AG04449 (cell line): ENCODE measurements at regions of chr9 and their contacts with region 1.

Region 1: DNA sequence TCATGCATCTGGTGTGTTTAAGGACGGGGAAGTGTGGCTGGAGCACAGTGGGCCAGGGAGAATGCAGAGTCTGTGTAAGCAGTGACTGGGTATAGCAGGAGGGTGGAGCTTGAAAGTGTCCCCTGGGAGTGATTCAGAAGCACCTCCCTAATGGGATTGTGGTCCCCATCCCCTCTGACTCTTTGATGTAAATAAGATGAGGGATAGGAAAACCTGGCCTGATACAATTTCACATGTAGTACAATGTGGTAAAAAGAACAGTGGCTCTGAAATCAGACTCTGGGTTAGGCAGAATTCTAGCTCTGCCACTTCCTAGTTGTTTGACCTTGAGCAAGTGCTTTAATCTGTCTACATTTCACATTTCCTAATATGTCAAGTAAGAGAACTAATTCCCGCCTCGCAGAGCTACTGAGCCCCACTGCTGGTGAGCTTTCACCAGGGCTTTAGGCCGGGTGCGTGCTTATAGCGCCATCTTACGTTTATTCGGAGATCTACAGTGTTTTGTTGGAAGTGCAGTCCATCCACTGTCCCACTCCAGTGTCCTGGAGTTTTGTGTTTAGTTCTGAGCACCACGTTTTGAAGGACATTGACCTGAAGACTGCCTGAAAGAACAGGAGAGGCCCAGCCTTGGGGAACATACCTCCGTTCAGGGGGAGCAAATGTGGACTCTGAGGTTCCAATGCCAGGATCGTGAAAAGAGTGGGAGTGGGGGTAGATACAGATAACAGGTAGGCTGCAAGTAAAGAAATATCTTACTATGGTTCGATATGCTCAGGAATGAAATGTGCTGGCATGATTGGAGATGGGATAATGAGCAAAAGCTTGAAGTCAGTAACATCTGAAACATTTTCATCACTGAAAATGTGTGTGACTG is 51.2 kb upstream of the TESK1 start:
- DNase-seq: no peak
- H3K4me3 ChIP-seq: no peak overlapping the region
- CTCF ChIP-seq: peak; percentile 68

Region 2: DNA sequence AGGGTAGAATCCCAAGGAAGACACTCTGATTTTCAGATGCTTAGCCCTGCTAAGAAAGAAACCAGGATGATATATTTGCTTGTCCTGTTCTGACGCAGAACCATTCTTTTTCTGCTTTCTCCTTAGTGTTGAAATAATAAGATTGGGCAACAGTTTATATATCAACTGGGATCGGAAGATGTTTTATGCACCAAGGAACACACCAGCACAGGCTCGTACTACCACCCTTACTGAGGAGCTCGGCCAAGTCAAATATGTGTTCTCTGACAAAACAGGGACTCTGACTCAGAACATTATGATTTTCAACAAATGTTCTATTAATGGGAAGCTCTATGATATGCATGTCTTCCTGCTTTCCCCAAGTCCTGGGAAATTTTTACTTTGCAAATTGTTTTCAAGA is 83.0 kb before region 1 on chr9:
- CTCF ChIA-PET with region 1: interaction called, 170 read pairs
- POLR2A ChIA-PET with region 1: no interaction called
- DNase-seq: no peak
- H3K4me3 ChIP-seq: no peak overlapping the region
- CTCF ChIP-seq: no peak

Region 3: GRCh38 chr9:35489313-35490154 is 64.4 kb before region 1 on chr9 and contains the start of gene RUSC2:
- CTCF ChIA-PET with region 1: interaction called, 74 read pairs
- POLR2A ChIA-PET with region 1: interaction called, 5 read pairs
- DNase-seq: peak; percentile 65
- H3K4me3 ChIP-seq: peak within 1 kb of the TSS; percentile 93
- CTCF ChIP-seq: peak; percentile 52

Region 4: GRCh38 chr9:35510745-35511428 is 43.0 kb before region 1 on chr9:
- CTCF ChIA-PET with region 1: interaction called, 83 read pairs
- POLR2A ChIA-PET with region 1: no interaction called
- DNase-seq: peak; percentile 98
- H3K4me3 ChIP-seq: no peak overlapping the region
- CTCF ChIP-seq: peak; percentile 42

Region 5: GRCh38 chr9:35529161-35529823 is 24.6 kb before region 1 on chr9:
- CTCF ChIA-PET with region 1: interaction called, 83 read pairs
- POLR2A ChIA-PET with region 1: no interaction called
- DNase-seq: no peak
- H3K4me3 ChIP-seq: no peak overlapping the region
- CTCF ChIP-seq: no peak

Region 6: DNA sequence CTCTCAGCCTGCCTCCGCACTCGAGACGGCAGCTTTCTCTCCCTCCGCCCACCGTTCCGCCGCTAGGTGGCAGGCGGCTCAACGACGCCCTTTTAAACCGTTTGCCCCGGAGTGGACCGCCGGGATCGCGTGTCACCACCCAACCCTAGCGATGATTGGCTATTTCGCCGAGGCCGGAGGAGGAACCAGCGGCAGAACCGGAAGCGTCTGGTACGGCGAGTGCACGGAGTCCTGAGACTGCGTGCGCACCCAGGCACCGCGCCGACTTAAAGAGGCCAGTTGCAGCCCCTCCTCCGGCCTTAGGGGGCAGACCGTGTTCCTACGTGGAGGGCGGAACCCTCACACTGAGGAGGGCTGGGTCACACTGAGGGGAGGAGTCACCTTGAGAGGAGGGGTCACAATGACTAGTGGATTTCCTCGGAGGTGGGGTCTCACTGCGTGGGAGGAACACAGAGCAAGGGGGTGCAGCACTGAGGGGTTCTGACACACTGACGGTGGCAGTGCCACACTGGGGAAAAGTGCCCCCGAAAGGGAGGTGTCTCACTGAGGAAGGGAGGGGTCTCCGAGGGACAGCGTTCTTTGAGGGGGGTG is 50.2 kb after region 1 on chr9:
- CTCF ChIA-PET with region 1: interaction called, 13 read pairs
- POLR2A ChIA-PET with region 1: interaction called, 3 read pairs
- DNase-seq: peak; percentile 96
- H3K4me3 ChIP-seq: peak overlapping the region; percentile 72
- CTCF ChIP-seq: peak; percentile 92

Region 7: DNA sequence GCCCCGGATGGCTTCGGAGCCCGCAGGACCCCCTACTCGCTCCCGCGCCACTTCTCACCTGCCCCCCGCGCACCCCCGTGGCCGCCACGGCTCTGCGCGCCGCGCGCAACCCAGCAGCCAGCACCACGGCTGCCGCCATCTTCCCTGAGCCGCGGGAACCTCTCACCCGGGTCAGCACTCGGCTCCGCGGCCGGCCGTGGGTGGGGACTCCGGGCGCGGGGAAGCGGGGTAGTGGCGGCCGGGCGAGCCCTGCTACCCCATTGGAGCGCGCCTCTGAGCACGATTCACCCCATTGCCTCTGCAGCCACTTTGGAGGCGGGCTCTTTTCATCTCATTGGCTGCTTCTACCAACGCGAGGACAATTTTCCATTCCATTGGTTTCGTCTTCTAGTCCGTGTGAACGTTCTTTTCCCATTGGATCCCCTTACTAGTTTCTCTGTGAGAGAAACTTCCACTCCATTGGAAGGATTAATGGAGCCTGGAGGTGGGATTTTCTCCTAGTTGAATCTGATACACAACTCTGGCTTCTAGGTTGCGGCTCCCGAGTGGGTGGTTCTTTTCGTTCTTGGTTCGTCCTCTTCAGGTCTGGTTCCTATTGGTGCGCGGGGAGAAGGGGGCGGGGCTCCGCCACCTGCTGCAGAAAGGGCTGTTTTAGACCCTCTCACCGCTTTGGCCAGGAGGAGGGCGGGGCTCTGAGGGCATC is 261.1 kb after region 1 on chr9 and contains the start of gene HINT2:
- CTCF ChIA-PET with region 1: no interaction called
- POLR2A ChIA-PET with region 1: no interaction called
- DNase-seq: peak; percentile 94
- H3K4me3 ChIP-seq: peak within 1 kb of the TSS; percentile 87
- CTCF ChIP-seq: no peak